MCF 10A (cell line): ENCODE measurements at regions of chr3 and their contacts with region 1.

Region 1: GRCh38 chr3:112582244-112582874 is 20.5 kb downstream of the SLC35A5 start:
- DNase-seq: peak; percentile 51
- H3K4me3 Mint-ChIP-seq: no peak overlapping the region
- H3K27ac Mint-ChIP-seq: no peak overlapping the region
- H3K4me1 Mint-ChIP-seq: no peaks in the 10 kb centered on the region
- H3K27me3 Mint-ChIP-seq: no peaks in the 10 kb centered on the region
- CTCF ChIP-seq: peak; percentile 51

Region 2: DNA sequence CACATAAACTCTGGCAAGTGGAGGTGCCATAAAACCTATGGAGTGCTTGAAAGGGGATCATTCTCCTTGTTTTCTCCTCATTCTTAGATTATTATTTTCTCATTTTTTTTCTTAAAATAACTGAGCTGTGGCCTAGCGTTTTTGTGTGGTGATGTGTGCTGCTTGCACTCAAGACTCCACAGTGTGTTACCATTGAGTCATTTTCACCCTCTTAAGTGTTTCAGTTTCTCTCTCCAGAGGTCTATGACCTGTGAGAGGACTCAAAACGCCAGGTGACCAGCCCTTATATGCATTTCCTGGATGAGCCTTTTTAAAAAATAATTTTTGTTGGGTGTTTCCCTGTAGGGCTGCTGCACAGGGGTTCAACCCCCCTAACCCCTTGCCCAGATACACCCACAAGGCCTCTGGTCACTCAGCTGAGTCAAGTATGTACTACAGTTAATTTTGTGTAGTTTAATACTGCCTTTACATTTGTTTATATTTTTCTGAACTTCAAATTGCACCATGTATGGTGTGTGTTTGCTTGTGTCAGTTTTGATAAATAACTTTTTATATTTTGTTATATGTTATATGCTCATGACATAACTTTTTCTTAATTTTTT is 67.7 kb before region 1 on chr3:
- CTCF ChIA-PET with region 1: no interaction called
- POLR2A ChIA-PET with region 1: no interaction called
- intact Hi-C with region 1: no loop called
- DNase-seq: no peak
- H3K4me3 Mint-ChIP-seq: no peak overlapping the region
- H3K27ac Mint-ChIP-seq: no peak overlapping the region
- H3K4me1 Mint-ChIP-seq: no peaks in the 10 kb centered on the region
- H3K27me3 Mint-ChIP-seq: no peaks in the 10 kb centered on the region
- CTCF ChIP-seq: no peak

Region 3: GRCh38 chr3:112593258-112593657 is 10.9 kb after region 1 on chr3:
- CTCF ChIA-PET with region 1: interaction called, 14 read pairs
- POLR2A ChIA-PET with region 1: interaction called, 3 read pairs
- intact Hi-C with region 1: no loop called
- DNase-seq: no peak
- H3K4me3 Mint-ChIP-seq: no peak overlapping the region
- H3K27ac Mint-ChIP-seq: no peak overlapping the region
- H3K4me1 Mint-ChIP-seq: no peaks in the 10 kb centered on the region
- H3K27me3 Mint-ChIP-seq: no peaks in the 10 kb centered on the region
- CTCF ChIP-seq: no peak

Region 4: GRCh38 chr3:112619295-112619694 is 36.9 kb after region 1 on chr3:
- CTCF ChIA-PET with region 1: interaction called, 14 read pairs
- POLR2A ChIA-PET with region 1: interaction called, 4 read pairs
- intact Hi-C with region 1: no loop called
- DNase-seq: peak; percentile 42
- H3K4me3 Mint-ChIP-seq: no peak overlapping the region
- H3K27ac Mint-ChIP-seq: no peak overlapping the region
- H3K4me1 Mint-ChIP-seq: no peaks in the 10 kb centered on the region
- H3K27me3 Mint-ChIP-seq: no peaks in the 10 kb centered on the region
- CTCF ChIP-seq: no peak

Region 5: GRCh38 chr3:112642912-112643506 is 60.6 kb after region 1 on chr3:
- CTCF ChIA-PET with region 1: interaction called, 77 read pairs
- POLR2A ChIA-PET with region 1: interaction called, 9 read pairs
- intact Hi-C with region 1: loop called (anchors 1 kb)
- DNase-seq: peak; percentile 94
- H3K4me3 Mint-ChIP-seq: peak overlapping the region; percentile 45
- H3K27ac Mint-ChIP-seq: peak overlapping the region; percentile 75
- H3K4me1 Mint-ChIP-seq: peaks cover 36% of the 10 kb centered on the region
- H3K27me3 Mint-ChIP-seq: no peaks in the 10 kb centered on the region
- CTCF ChIP-seq: peak; percentile 86

Region 6: DNA sequence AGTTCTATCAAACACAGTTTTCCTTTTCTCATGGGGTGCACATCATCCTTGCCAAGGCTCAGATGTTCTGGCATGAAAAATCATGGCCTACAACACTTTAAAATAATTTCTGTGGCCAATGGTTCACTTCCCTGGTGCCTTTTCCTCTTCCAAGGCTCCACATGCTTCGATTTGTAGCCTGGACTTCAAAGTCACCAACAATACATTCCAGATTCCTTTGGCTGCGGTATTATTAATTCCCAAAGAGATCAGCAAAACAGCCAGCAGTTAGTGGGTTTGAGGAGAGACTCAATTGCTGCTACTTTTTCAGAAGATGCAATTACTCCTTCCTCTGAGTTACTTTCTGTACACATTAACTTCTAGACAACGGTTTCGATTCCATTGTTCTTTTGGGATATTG is 138.9 kb after region 1 on chr3:
- CTCF ChIA-PET with region 1: no interaction called
- POLR2A ChIA-PET with region 1: no interaction called
- intact Hi-C with region 1: no loop called
- DNase-seq: no peak
- H3K4me3 Mint-ChIP-seq: no peak overlapping the region
- H3K27ac Mint-ChIP-seq: no peak overlapping the region
- H3K4me1 Mint-ChIP-seq: no peaks in the 10 kb centered on the region
- H3K27me3 Mint-ChIP-seq: no peaks in the 10 kb centered on the region
- CTCF ChIP-seq: no peak

Region 7: GRCh38 chr3:112734718-112735350 is 152.5 kb after region 1 on chr3:
- CTCF ChIA-PET with region 1: interaction called, 10 read pairs
- POLR2A ChIA-PET with region 1: no interaction called
- intact Hi-C with region 1: no loop called
- DNase-seq: peak; percentile 81
- H3K4me3 Mint-ChIP-seq: no peak overlapping the region
- H3K27ac Mint-ChIP-seq: no peak overlapping the region
- H3K4me1 Mint-ChIP-seq: peaks cover 14% of the 10 kb centered on the region
- H3K27me3 Mint-ChIP-seq: no peaks in the 10 kb centered on the region
- CTCF ChIP-seq: peak; percentile 72

Region 8: GRCh38 chr3:112973325-112974177 is 391.2 kb after region 1 on chr3:
- CTCF ChIA-PET with region 1: interaction called, 23 read pairs
- POLR2A ChIA-PET with region 1: no interaction called
- intact Hi-C with region 1: no loop called
- DNase-seq: no peak
- H3K4me3 Mint-ChIP-seq: no peak overlapping the region
- H3K27ac Mint-ChIP-seq: no peak overlapping the region
- H3K4me1 Mint-ChIP-seq: no peaks in the 10 kb centered on the region
- H3K27me3 Mint-ChIP-seq: peaks cover 45% of the 10 kb centered on the region
- CTCF ChIP-seq: no peak

Region 9: GRCh38 chr3:113287803-113288648 is 705.7 kb after region 1 on chr3:
- CTCF ChIA-PET with region 1: no interaction called
- POLR2A ChIA-PET with region 1: no interaction called
- intact Hi-C with region 1: loop called (anchors 10 kb)
- DNase-seq: peak; percentile 73
- H3K4me3 Mint-ChIP-seq: no peak overlapping the region
- H3K27ac Mint-ChIP-seq: no peak overlapping the region
- H3K4me1 Mint-ChIP-seq: peaks cover 9% of the 10 kb centered on the region
- H3K27me3 Mint-ChIP-seq: no peaks in the 10 kb centered on the region
- CTCF ChIP-seq: peak; percentile 97